ENCODE measurements at regions of chr3 and their contacts with region 1.

Region 1: DNA sequence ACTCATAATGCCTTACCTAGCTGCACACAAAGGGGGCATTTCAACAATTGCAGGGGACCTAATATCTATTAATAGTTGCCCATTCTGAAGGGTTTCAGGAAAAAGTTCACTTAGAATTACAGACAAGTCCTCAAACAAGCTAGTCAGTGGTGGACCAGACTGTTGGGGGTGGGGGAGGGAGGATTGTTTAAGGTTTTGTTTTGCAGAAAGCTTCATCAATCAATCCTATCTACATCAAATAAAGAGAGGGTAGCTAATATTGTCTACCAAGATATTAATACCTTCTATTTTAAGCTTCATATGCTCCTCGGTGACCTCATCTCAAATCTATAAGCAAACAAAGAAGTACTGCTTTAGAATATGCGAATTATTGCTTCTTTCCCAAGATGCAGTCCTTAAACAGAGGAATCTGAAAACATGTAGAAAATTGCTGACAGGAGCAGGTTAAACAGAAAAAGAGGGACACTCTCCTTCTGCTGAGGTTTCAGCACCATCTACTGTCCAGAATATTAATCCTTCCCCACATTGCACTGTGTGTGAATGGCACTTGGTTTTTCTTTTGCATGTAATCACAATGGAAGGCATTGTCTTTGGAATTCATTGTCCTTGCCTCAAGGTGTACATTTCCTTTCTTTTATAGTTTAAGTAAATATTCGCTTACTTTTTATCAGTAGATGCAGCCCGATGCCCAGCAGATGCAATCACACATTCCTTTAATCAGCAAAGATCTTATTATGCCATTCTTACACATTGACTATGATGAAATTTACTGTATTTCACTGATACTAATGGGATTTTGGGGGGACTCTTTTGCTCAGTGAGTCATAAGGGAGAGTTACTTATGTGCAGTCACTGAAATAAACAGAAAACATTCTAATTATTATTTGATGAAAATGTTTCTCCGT is 94.7 kb downstream of the IL5RA start:
- DNase-seq: no peak
- ATAC-seq: peak in 3 of 4 donors; percentile 61 to 81 (median 77)
- H3K4me3 ChIP-seq: no peak overlapping the region
- H3K27ac ChIP-seq: no peak overlapping the region
- H3K4me1 ChIP-seq: peaks cover 0 to 5% (median 0%) of the 10 kb centered on the region in 12 donors
- H3K27me3 ChIP-seq: peaks cover 0 to 5% (median 0%) of the 10 kb centered on the region in 9 donors
- CTCF ChIP-seq: peak; percentile 25 to 63 (median 51)
- POLR2A ChIP-seq: no peak

Region 2: DNA sequence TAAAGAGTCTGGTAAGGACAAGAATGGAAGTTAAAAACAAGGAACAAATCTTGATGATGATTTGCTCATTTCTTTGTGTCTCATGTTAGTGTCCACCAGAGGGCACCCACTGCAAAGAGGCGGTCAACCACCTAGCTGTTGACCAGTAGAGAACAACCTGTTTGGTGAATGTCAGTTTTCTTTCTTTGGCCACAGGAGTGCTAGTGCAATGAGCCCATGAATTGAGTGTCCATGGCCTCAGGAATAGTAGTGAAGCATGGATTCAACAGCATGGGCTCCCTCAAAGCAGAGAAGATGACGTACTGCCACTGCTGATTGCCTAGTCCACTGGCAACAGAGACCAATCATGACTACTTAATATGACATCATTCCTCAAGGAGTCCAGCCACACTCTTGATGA is 1933.3 kb before region 1 on chr3:
- intact Hi-C with region 1: loop called in 8 of 10 experiments (anchors 5 to 10 kb)
- DNase-seq: peak in 2 of 5 donors; percentile 20 to 25
- ATAC-seq: no peak
- H3K4me3 ChIP-seq: no peak overlapping the region
- H3K27ac ChIP-seq: no peak overlapping the region
- H3K4me1 ChIP-seq: no peaks in the 10 kb centered on the region
- H3K27me3 ChIP-seq: no peaks in the 10 kb centered on the region
- CTCF ChIP-seq: peak; percentile 29 to 68 (median 46)
- POLR2A ChIP-seq: no peak